ENCODE measurements at regions of chr19 and their contacts with region 1.

Region 1: GRCh38 chr19:12974301-12975220 is 5.2 kb downstream of the DAND5 start:
- DNase-seq: no peak
- H3K4me3 ChIP-seq: no peak overlapping the region
- H3K27ac ChIP-seq: no peak overlapping the region
- H3K4me1 ChIP-seq: no peaks in the 10 kb centered on the region
- H3K27me3 ChIP-seq: no peaks in the 10 kb centered on the region
- CTCF ChIP-seq: no peak

Region 2: GRCh38 chr19:13074378-13074777 is 99.8 kb after region 1 on chr19:
- CTCF ChIA-PET with region 1: no interaction called
- POLR2A ChIA-PET with region 1: interaction called, 12 read pairs
- intact Hi-C with region 1: no loop called
- DNase-seq: no peak
- H3K4me3 ChIP-seq: no peak overlapping the region
- H3K27ac ChIP-seq: no peak overlapping the region
- H3K4me1 ChIP-seq: peaks cover 22% of the 10 kb centered on the region
- H3K27me3 ChIP-seq: no peaks in the 10 kb centered on the region
- CTCF ChIP-seq: no peak

Region 3: DNA sequence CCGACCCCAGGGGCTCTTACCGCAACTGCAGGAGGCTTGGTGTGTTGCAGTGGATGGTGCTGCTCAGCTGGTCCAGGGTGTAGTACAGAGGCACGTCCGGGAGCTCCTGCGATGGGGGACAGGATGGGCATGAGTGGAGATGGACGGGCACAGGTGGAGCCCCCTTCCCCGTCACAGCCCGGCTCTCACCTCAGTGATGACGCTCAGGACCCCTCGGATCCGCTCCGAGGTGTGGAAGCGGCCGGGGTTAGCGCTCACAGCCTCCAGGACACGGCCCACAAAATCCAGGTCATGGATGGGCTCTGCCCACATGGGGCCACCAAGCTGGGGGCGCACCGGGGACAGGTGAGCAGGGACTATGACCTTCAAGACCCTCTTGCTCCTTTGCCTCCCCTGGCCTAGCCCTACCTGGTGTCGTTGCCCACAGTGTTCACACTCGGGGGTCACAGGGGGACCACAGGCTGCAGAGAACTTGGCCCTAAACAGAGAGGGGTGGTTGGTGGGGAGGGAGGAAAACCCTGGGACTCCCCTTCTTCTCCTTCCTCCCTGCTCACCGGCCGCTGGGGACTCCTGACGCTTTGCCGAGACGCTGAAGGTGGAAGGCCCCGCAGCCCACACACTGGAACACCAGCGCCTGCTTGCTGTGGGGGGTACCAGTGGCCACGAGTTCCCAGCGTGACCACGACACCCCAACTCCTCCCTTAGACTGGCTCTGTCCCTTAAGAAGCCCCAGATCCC is 135.0 kb after region 1 on chr19:
- CTCF ChIA-PET with region 1: interaction called, 13 read pairs
- POLR2A ChIA-PET with region 1: no interaction called
- intact Hi-C with region 1: no loop called
- DNase-seq: no peak
- H3K4me3 ChIP-seq: no peak overlapping the region
- H3K27ac ChIP-seq: no peak overlapping the region
- H3K4me1 ChIP-seq: no peaks in the 10 kb centered on the region
- H3K27me3 ChIP-seq: no peaks in the 10 kb centered on the region
- CTCF ChIP-seq: no peak

Region 4: DNA sequence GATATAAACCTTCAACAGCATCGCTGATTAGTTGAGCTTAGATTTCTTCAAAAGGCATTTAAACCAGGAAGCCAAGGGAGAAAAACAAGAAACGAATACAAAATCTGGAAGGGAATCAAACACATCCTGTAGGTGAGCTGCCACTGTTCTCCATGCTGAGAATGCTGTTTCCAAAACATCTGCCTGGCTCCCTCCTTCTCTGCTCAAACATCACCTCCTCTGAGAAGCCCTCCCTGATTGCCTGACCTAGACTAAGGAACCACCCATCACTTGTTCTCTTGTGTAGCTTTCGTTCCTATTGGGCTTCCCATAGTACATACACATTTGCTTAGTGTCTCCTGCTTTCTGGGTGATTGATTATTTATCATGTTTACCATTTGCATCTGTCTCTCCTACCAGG is 379.1 kb after region 1 on chr19:
- CTCF ChIA-PET with region 1: interaction called, 12 read pairs
- POLR2A ChIA-PET with region 1: no interaction called
- intact Hi-C with region 1: no loop called
- DNase-seq: no peak
- H3K4me3 ChIP-seq: no peak overlapping the region
- H3K27ac ChIP-seq: no peak overlapping the region
- H3K4me1 ChIP-seq: no peaks in the 10 kb centered on the region
- H3K27me3 ChIP-seq: peaks cover 11% of the 10 kb centered on the region
- CTCF ChIP-seq: no peak

Region 5: DNA sequence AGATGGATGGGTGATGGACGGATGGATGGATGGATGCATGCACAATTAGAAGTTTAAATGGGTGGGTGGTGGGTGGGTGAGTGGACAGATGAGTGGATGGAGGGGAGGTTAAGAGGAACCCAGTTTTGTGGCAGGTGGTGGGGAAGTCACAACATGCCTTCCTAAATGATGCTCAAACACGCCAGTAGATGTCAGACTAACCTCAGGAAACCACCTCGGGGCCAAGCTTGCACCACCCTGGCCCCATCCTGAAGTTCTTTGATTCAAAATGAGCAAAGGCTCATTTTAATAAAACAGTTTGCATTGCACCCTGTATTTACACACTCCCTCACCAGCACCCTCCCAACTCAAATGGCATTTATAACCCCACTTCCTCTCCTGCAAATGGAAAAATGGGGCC is 623.1 kb after region 1 on chr19:
- CTCF ChIA-PET with region 1: no interaction called
- POLR2A ChIA-PET with region 1: no interaction called
- intact Hi-C with region 1: loop called (anchors 10 kb)
- DNase-seq: peak; percentile 82
- H3K4me3 ChIP-seq: no peak overlapping the region
- H3K27ac ChIP-seq: no peak overlapping the region
- H3K4me1 ChIP-seq: peaks cover 5% of the 10 kb centered on the region
- H3K27me3 ChIP-seq: no peaks in the 10 kb centered on the region
- CTCF ChIP-seq: peak; percentile 68

Measured in A673 (cell line).